ENCODE measurements at regions of chr9 and their contacts with region 1.

Region 1: DNA sequence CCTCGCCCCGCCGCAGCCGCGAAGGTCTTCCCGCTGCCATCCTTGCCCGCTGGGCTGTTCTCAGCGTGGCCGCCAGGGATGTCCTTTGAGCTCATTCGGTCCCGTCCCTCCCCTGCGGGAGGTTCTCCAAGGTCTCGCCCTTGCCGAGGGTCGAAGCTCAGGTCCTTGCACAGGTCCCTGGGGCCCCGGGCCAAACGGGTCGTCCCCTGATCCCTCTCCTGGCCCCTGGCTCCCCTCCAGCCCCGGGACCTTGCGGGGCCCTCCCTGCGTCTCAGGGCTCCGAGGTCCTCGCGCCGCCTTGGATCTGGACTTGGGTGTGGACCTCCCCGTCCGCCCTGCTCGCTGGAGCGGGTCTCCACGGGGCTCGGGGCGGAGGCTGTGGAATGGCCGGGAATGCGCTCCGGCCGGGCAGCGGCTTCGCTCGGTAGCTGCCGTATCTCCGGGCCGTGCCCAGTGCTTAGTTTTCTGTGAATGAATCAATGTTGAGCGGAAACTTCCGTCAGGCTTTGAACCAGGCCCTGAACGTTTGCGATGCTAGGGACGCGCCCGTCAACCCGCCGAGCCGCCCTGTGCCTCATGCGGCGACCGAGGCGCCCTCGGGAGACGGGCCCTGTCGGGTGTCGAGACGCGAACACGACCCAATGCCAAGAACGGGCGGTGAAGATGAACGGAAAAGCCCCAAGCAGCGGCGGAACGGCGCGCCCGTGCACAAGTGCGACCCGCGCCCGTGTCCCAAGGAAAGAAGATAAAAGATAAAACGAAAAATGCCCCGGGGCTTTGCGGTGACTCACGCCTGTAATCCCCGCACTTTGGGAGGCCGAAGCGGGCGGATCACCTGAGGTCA is 789 bp downstream of the RNU6ATAC start:
- DNase-seq: peak; percentile 71
- H3K4me3 ChIP-seq: peak overlapping the region in 1 of 4 donors; percentile 24
- H3K27ac ChIP-seq: no peak overlapping the region
- H3K4me1 ChIP-seq: peaks cover 4 to 20% (median 13%) of the 10 kb centered on the region in 4 donors
- H3K27me3 ChIP-seq: no peaks in the 10 kb centered on the region
- CTCF ChIP-seq: peak; percentile 54 to 92 (median 69)
- EP300 ChIP-seq: no peak
- POLR2A ChIP-seq: peak; percentile 44

Region 2: GRCh38 chr9:133821601-133822429 is 341.8 kb before region 1 on chr9:
- in situ Hi-C with region 1: no loop called
- intact Hi-C with region 1: no loop called
- DNase-seq: no peak
- H3K4me3 ChIP-seq: no peak overlapping the region
- H3K27ac ChIP-seq: no peak overlapping the region
- H3K4me1 ChIP-seq: peaks cover 0 to 15% (median 3%) of the 10 kb centered on the region in 4 donors
- H3K27me3 ChIP-seq: no peaks in the 10 kb centered on the region
- CTCF ChIP-seq: no peak
- EP300 ChIP-seq: no peak
- POLR2A ChIP-seq: no peak

Region 3: GRCh38 chr9:134067904-134068743 is 95.5 kb before region 1 on chr9 and contains the start of gene BRD3:
- in situ Hi-C with region 1: no loop called
- intact Hi-C with region 1: loop called (anchors 5 kb)
- DNase-seq: peak; percentile 88
- H3K4me3 ChIP-seq: peak within 1 kb of the TSS; percentile 83 to 95 (median 92)
- H3K27ac ChIP-seq: peak within 1 kb of the TSS; percentile 99 to 100 (median 100)
- H3K4me1 ChIP-seq: peaks cover 6 to 30% (median 19%) of the 10 kb centered on the region in 4 donors
- H3K27me3 ChIP-seq: peaks cover 22% of the 10 kb centered on the region
- CTCF ChIP-seq: no peak
- EP300 ChIP-seq: no peak
- POLR2A ChIP-seq: peak; percentile 57
- total RNA-seq, gene BRD3: 14.5 to 21.3 (median 17.2) TPM

Region 4: DNA sequence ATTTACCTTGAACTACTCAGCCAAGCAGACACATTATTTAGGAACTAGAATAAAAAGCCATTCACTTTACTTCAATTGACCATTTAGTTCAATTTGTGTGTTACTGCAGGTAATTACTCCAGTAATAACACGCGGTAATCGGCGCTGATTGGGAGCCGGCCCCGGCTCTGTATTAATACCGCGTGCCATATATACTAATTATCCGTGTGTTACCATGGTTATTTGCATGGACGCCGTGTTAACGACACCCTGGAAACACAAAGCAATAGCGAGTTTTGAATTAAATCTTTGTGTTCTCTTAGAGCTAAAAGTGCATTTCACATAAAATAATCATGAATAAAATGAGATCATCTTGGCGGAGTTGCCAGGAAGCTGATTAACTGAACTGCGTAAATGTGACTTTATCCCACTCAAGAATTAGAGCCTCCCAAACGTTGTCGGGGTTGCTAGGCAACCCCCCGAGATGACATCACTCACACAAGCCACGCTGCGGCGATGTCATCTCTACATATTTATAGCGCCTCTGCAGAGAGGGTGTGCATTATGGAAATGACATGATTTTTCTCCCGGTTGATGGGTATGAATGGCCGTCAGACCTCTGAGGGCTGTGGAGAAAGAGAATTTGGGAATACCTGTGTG is 42.2 kb after region 1 on chr9:
- in situ Hi-C with region 1: no loop called
- intact Hi-C with region 1: no loop called
- DNase-seq: peak; percentile 55
- H3K4me3 ChIP-seq: no peak overlapping the region
- H3K27ac ChIP-seq: peak overlapping the region in 2 of 4 donors; percentile 4 to 10
- H3K4me1 ChIP-seq: peaks cover 0 to 9% (median 9%) of the 10 kb centered on the region in 4 donors
- H3K27me3 ChIP-seq: no peaks in the 10 kb centered on the region
- CTCF ChIP-seq: no peak
- EP300 ChIP-seq: no peak
- POLR2A ChIP-seq: no peak

Region 5: GRCh38 chr9:134738869-134739659 is 575.5 kb after region 1 on chr9:
- in situ Hi-C with region 1: loop called in 1 of 4 experiments (anchors 25 kb)
- intact Hi-C with region 1: no loop called
- DNase-seq: peak; percentile 63
- H3K4me3 ChIP-seq: no peak overlapping the region
- H3K27ac ChIP-seq: peak overlapping the region in 2 of 4 donors; percentile 13
- H3K4me1 ChIP-seq: peaks cover 7 to 14% (median 13%) of the 10 kb centered on the region in 4 donors
- H3K27me3 ChIP-seq: no peaks in the 10 kb centered on the region
- CTCF ChIP-seq: peak; percentile 78 to 87 (median 86)
- EP300 ChIP-seq: no peak
- POLR2A ChIP-seq: no peak

Measured in transverse colon (tissue), 4 donors.